ENCODE measurements at regions of chr1 and their contacts with region 1.

Region 1: GRCh38 chr1:32716312-32717148 is 14.0 kb upstream of the SYNC start:
- DNase-seq: peak; percentile 84
- ATAC-seq: peak; percentile 88
- H3K4me3 Mint-ChIP-seq: no peak overlapping the region
- H3K27ac Mint-ChIP-seq: no peak overlapping the region
- H3K4me1 Mint-ChIP-seq: peaks cover 4% of the 10 kb centered on the region
- H3K27me3 Mint-ChIP-seq: peaks cover 4% of the 10 kb centered on the region
- CTCF ChIP-seq: no peak

Region 2: GRCh38 chr1:32695098-32695904 is 21.2 kb before region 1 on chr1:
- CTCF ChIA-PET with region 1: interaction called, 30 read pairs
- POLR2A ChIA-PET with region 1: no interaction called
- intact Hi-C with region 1: no loop called
- DNase-seq: no peak
- ATAC-seq: no peak
- H3K4me3 Mint-ChIP-seq: no peak overlapping the region
- H3K27ac Mint-ChIP-seq: no peak overlapping the region
- H3K4me1 Mint-ChIP-seq: no peaks in the 10 kb centered on the region
- H3K27me3 Mint-ChIP-seq: peaks cover 2% of the 10 kb centered on the region
- CTCF ChIP-seq: no peak

Region 3: GRCh38 chr1:32746130-32746529 is 29.6 kb after region 1 on chr1:
- CTCF ChIA-PET with region 1: interaction called, 13 read pairs
- POLR2A ChIA-PET with region 1: no interaction called
- intact Hi-C with region 1: no loop called
- DNase-seq: no peak
- ATAC-seq: no peak
- H3K4me3 Mint-ChIP-seq: no peak overlapping the region
- H3K27ac Mint-ChIP-seq: no peak overlapping the region
- H3K4me1 Mint-ChIP-seq: no peaks in the 10 kb centered on the region
- H3K27me3 Mint-ChIP-seq: peaks cover 14% of the 10 kb centered on the region
- CTCF ChIP-seq: no peak

Region 4: DNA sequence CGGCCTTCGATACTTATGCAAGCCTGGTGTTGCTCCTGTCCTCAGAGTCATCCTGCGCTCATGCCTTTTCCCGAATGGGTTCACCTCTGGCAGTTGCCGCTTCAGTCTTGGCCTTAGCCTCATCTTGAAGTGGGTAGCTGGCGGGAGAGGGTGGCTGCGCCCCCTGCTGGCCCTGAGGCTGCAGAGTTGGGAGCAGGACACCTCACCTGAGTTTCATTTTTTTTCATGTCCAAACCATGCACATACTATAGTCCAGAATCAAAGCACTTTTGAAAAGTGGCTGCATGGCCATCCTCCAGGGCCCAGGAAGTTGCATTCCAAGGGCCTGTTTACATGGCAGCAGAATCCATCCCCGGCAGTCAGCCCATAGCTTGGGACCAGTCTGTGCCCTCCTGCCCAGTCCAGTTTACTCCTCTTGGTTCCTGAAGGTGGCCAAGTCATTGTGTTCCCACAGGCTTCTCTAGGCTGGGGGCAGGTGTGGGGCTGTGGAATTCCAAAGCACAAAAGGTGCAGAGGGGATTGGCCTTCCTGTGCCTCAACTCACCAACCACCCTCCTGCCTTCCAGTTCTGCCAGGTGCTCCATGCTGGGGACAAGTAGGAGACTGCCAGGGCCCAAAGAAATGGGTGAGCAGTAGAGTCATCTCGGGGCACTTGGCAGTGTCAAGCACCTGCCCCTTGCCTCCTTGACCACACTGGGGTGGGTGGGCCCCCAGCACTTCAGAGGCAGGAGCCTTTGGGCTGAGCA is 56.7 kb after region 1 on chr1:
- CTCF ChIA-PET with region 1: interaction called, 197 read pairs
- POLR2A ChIA-PET with region 1: interaction called, 11 read pairs
- intact Hi-C with region 1: loop called (anchors 2 kb)
- DNase-seq: peak; percentile 86
- ATAC-seq: peak; percentile 82
- H3K4me3 Mint-ChIP-seq: no peak overlapping the region
- H3K27ac Mint-ChIP-seq: peak overlapping the region; percentile 19
- H3K4me1 Mint-ChIP-seq: peaks cover 16% of the 10 kb centered on the region
- H3K27me3 Mint-ChIP-seq: no peaks in the 10 kb centered on the region
- CTCF ChIP-seq: peak; percentile 92

Region 5: GRCh38 chr1:32876341-32877210 is 160.0 kb after region 1 on chr1:
- CTCF ChIA-PET with region 1: interaction called, 47 read pairs
- POLR2A ChIA-PET with region 1: no interaction called
- intact Hi-C with region 1: loop called (anchors 5 kb)
- DNase-seq: peak; percentile 74
- ATAC-seq: peak; percentile 84
- H3K4me3 Mint-ChIP-seq: no peak overlapping the region
- H3K27ac Mint-ChIP-seq: no peak overlapping the region
- H3K4me1 Mint-ChIP-seq: peaks cover 3% of the 10 kb centered on the region
- H3K27me3 Mint-ChIP-seq: peaks cover 35% of the 10 kb centered on the region
- CTCF ChIP-seq: peak; percentile 90

Region 6: DNA sequence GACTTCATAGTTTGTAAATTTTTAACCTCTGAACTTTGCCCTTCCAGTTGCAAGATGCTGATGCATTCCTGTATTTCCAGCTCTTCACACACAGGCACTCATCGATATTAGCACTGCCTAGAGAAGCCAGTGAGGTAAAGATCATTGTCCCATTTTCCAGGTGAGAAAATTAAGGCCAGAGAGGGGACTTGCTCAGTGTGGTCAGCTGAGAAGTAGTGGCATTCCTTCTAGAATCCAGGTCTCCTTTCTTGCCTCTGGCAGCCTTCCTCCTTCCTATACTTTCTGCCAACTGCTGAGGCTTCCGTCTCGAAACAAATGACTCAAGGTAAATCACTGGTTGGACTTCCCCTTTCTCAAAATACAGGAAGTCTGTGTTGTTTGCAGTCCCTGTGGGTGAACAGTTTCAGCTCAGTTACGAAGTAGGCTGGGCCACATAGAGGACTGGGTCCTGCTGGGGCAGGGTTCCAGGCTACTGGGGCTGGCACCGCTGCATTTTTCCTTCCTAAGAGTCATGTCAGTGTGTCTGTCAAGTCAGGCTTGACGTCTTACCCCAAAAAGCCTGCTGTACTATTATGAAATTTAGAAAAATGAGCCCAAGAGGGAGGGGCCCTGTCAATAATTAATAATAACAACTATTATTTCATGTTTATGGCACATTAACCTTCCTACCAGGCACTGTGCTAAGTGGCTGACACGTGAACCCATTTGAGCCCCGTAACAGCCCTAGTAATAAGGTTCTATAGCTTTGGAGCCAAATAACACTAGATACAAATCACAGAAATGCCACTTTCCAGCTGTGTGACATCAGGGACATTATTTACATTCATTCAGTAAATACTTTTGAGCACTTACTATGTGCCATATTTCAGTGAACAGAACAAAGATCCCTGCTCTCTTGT is 264.7 kb after region 1 on chr1:
- CTCF ChIA-PET with region 1: no interaction called
- POLR2A ChIA-PET with region 1: no interaction called
- intact Hi-C with region 1: no loop called
- DNase-seq: peak; percentile 74
- ATAC-seq: peak; percentile 97
- H3K4me3 Mint-ChIP-seq: peak overlapping the region; percentile 28
- H3K27ac Mint-ChIP-seq: peak overlapping the region; percentile 78
- H3K4me1 Mint-ChIP-seq: peaks cover 44% of the 10 kb centered on the region
- H3K27me3 Mint-ChIP-seq: no peaks in the 10 kb centered on the region
- CTCF ChIP-seq: no peak